Activated B cell treated with CpG ODN at 0.5 μM for 24 hours (primary cell): ENCODE measurements at regions of chr9 and their contacts with region 1.

Region 1: DNA sequence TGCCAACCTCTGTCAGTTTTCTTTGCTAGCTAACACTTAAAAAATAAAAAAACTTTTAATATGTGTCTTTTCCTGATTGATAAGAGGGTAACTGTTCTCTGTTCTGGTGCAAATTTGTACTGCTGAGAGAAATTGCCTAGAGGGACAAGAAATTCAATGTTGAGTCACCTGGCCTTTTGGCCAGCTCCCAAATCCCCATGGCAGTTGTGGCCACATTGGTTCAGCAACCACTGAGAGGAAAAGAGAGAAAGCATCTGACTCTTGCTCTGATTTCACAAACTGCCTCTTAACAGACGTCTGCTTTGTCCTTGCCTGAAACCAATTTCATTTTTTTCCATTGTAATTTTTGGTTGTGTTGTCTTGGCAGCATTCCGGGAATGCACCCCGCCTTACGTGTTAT is 42.4 kb downstream of the NTRK2 start:
- DNase-seq: no peak
- ATAC-seq: no peak
- H3K4me3 Mint-ChIP-seq: no peak overlapping the region
- H3K27ac Mint-ChIP-seq: no peak overlapping the region
- H3K4me1 Mint-ChIP-seq: peaks cover 1% of the 10 kb centered on the region
- H3K27me3 Mint-ChIP-seq: peaks cover 10% of the 10 kb centered on the region
- CTCF ChIP-seq: no peak

Region 2: GRCh38 chr9:84744195-84744594 is 32.3 kb after region 1 on chr9:
- CTCF ChIA-PET with region 1: no interaction called
- POLR2A ChIA-PET with region 1: no interaction called
- intact Hi-C with region 1: no loop called
- DNase-seq: no peak
- ATAC-seq: no peak
- H3K4me3 Mint-ChIP-seq: no peak overlapping the region
- H3K27ac Mint-ChIP-seq: no peak overlapping the region
- H3K4me1 Mint-ChIP-seq: peaks cover 2% of the 10 kb centered on the region
- H3K27me3 Mint-ChIP-seq: no peaks in the 10 kb centered on the region
- CTCF ChIP-seq: no peak

Region 3: DNA sequence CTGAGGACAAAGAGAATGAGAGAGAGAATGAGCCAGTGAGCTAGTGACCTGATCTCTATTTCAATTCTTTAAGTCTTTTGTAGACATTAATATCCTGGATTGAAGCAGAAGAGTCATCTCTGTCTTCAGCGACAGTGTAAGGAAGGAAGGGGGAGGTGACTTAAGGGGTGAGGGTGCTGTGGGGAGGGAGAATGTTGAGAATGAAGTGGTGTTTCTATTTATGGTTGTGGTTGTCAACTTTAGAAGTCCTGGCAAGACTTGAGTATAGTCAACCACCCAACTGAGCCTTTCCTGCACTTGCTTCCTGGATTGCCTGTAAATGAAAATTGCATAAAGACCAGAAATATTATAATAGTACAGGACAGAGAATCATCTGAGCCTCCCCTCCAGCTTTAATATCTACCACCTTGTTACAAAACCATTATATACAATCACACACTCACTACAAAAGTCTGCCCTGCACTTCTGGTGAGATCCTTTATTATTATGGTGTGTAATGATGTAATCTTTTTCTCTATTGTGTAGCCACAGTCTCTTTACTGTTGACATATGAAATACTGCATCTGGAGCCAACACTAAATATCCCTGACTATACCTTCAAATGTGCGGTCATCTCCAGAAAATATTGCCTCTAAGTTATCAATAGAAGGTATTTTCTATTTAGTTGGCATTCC is 49.4 kb after region 1 on chr9:
- CTCF ChIA-PET with region 1: no interaction called
- POLR2A ChIA-PET with region 1: no interaction called
- intact Hi-C with region 1: loop called (anchors 5 kb)
- DNase-seq: no peak
- ATAC-seq: no peak
- H3K4me3 Mint-ChIP-seq: no peak overlapping the region
- H3K27ac Mint-ChIP-seq: no peak overlapping the region
- H3K4me1 Mint-ChIP-seq: peaks cover 6% of the 10 kb centered on the region
- H3K27me3 Mint-ChIP-seq: no peaks in the 10 kb centered on the region
- CTCF ChIP-seq: no peak